ENCODE measurements at regions of chr10 and their contacts with region 1.

Region 1: GRCh38 chr10:122980209-122981065 is at the start of gene PSTK:
- DNase-seq: peak; percentile 38
- H3K4me3 ChIP-seq: peak within 1 kb of the TSS; percentile 92
- CTCF ChIP-seq: peak; percentile 95

Region 2: GRCh38 chr10:122953827-122954730 is 26.4 kb before region 1 on chr10 and contains the start of gene C10orf88:
- CTCF ChIA-PET with region 1: interaction called, 24 read pairs
- POLR2A ChIA-PET with region 1: interaction called, 4 read pairs
- DNase-seq: peak; percentile 93
- H3K4me3 ChIP-seq: peak within 1 kb of the TSS; percentile 80
- CTCF ChIP-seq: peak; percentile 1

Region 3: GRCh38 chr10:122968698-122969097 is 11.7 kb before region 1 on chr10:
- CTCF ChIA-PET with region 1: interaction called, 37 read pairs
- POLR2A ChIA-PET with region 1: no interaction called
- DNase-seq: no peak
- H3K4me3 ChIP-seq: no peak overlapping the region
- CTCF ChIP-seq: no peak

Region 4: GRCh38 chr10:122999347-122999746 is 18.9 kb after region 1 on chr10:
- CTCF ChIA-PET with region 1: interaction called, 41 read pairs
- POLR2A ChIA-PET with region 1: no interaction called
- DNase-seq: no peak
- H3K4me3 ChIP-seq: no peak overlapping the region
- CTCF ChIP-seq: no peak

Region 5: GRCh38 chr10:123008439-123009205 is 28.2 kb after region 1 on chr10 and contains the starts of genes ACADSB and IKZF5:
- CTCF ChIA-PET with region 1: interaction called, 41 read pairs
- POLR2A ChIA-PET with region 1: no interaction called
- DNase-seq: peak; percentile 92
- H3K4me3 ChIP-seq: peak within 1 kb of the TSS; percentile 96
- CTCF ChIP-seq: no peak

Region 6: DNA sequence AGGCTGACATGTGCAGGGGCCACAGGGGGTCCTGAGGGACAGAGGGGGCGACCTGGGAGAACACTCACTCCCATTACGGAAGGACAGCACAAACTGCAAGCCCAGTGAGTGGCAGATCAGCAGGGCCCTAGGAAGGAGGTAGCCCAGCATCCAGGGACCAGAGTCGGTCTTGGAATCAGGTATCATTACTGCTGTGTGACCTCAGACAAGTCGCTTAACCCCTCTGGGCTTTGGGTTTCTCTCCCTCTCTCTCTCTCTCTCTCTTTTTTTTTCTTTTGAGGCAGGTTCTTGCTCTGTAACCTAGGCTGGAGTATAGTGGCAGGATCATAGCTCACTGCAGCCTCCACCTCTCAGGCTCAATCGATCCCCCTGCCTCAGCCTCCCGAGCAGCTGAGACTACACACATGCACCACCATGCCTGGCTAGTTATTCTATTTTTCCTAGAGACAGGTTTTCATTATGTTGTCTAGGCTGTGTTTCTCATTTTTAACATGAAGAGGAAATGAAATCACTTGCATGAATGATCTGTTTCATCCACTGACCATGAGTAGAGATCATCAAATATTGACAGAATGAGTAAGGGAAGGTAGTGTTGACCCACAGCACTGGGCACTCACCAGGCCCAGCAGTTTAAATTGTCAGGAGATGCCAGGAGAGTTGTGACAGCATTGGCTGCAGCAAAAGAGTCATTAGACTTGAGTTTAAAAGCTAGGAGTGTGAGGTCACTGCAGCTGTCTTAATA is 223.1 kb after region 1 on chr10:
- CTCF ChIA-PET with region 1: no interaction called
- POLR2A ChIA-PET with region 1: no interaction called
- DNase-seq: no peak
- H3K4me3 ChIP-seq: no peak overlapping the region
- CTCF ChIP-seq: no peak

Region 7: GRCh38 chr10:123451618-123452245 is 471.3 kb after region 1 on chr10:
- CTCF ChIA-PET with region 1: no interaction called
- POLR2A ChIA-PET with region 1: no interaction called
- DNase-seq: no peak
- H3K4me3 ChIP-seq: no peak overlapping the region
- CTCF ChIP-seq: no peak

Measured in AG04449 (cell line).